Activated B cell treated with CpG ODN at 0.5 μM for 24 hours (primary cell): ENCODE measurements at regions of chr19 and their contacts with region 1.

Region 1: DNA sequence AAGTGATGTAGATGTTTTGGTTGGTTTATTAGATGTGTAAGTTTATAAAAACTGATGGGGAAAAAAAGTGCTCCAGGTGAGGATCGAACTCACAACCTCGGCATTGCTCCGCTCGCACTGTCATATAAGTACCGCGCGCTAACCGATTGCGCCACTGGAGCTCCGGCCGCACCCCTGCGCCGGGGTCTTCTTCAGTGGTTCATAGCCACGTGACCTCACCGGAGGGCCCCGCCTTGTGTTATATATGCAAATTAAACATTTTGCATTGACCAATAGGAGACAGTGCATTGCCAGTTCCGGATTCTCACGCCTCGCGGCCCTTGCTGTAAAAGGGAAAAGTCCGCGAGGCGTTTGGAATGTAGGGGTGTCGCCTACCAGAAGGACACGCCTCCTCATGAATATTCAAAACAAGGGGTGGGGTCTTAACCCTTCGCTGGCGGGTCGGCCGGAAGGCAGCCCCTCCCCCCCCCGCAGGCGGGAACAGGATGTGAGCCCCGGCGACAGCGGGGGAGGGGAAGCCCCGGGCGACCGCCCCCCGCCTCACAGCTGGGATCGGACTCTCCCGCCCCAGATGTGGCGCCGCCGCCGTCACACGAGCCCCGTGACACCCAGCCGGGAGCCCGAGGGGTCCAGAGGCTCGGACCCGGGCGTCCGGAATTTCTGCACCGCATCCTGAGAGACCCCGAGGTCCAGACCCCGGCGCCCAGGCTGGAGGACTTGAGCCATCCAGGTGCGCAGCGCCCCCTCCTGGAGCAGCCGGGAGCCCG is at the start of gene PLEKHG2:
- DNase-seq: peak; percentile 97
- ATAC-seq: peak; percentile 59
- H3K4me3 Mint-ChIP-seq: peak within 1 kb of the TSS; percentile 89
- H3K27ac Mint-ChIP-seq: peak within 1 kb of the TSS; percentile 98
- H3K4me1 Mint-ChIP-seq: peaks cover 59% of the 10 kb centered on the region
- H3K27me3 Mint-ChIP-seq: peaks cover 4% of the 10 kb centered on the region
- CTCF ChIP-seq: no peak
- total RNA-seq, gene PLEKHG2: 111 and 125 TPM in 2 replicates

Region 2: GRCh38 chr19:39335168-39335548 is 77.1 kb before region 1 on chr19:
- CTCF ChIA-PET with region 1: interaction called, 4 read pairs
- POLR2A ChIA-PET with region 1: interaction called, 10 read pairs
- intact Hi-C with region 1: no loop called
- DNase-seq: no peak
- ATAC-seq: peak; percentile 22
- H3K4me3 Mint-ChIP-seq: peak overlapping the region; percentile 94
- H3K27ac Mint-ChIP-seq: peak overlapping the region; percentile 95
- H3K4me1 Mint-ChIP-seq: peaks cover 61% of the 10 kb centered on the region
- H3K27me3 Mint-ChIP-seq: no peaks in the 10 kb centered on the region
- CTCF ChIP-seq: no peak

Region 3: GRCh38 chr19:39351537-39352064 is 60.7 kb before region 1 on chr19:
- CTCF ChIA-PET with region 1: interaction called, 3 read pairs
- POLR2A ChIA-PET with region 1: interaction called, 4 read pairs
- intact Hi-C with region 1: loop called (anchors 1 kb)
- DNase-seq: no peak
- ATAC-seq: peak; percentile 97
- H3K4me3 Mint-ChIP-seq: no peak overlapping the region
- H3K27ac Mint-ChIP-seq: peak overlapping the region; percentile 86
- H3K4me1 Mint-ChIP-seq: peaks cover 25% of the 10 kb centered on the region
- H3K27me3 Mint-ChIP-seq: no peaks in the 10 kb centered on the region
- CTCF ChIP-seq: no peak

Region 4: GRCh38 chr19:39397360-39398296 is 14.7 kb before region 1 on chr19:
- CTCF ChIA-PET with region 1: interaction called, 168 read pairs
- POLR2A ChIA-PET with region 1: interaction called, 213 read pairs
- intact Hi-C with region 1: loop called (anchors 1 kb)
- DNase-seq: peak; percentile 91
- ATAC-seq: peak; percentile 59
- H3K4me3 Mint-ChIP-seq: peak overlapping the region; percentile 67
- H3K27ac Mint-ChIP-seq: peak overlapping the region; percentile 91
- H3K4me1 Mint-ChIP-seq: peaks cover 62% of the 10 kb centered on the region
- H3K27me3 Mint-ChIP-seq: no peaks in the 10 kb centered on the region
- CTCF ChIP-seq: peak; percentile 84

Region 5: GRCh38 chr19:39480337-39481228 is 68.3 kb after region 1 on chr19 and contains the start of gene TIMM50:
- CTCF ChIA-PET with region 1: no interaction called
- POLR2A ChIA-PET with region 1: interaction called, 3 read pairs
- intact Hi-C with region 1: loop called (anchors 1 kb)
- DNase-seq: peak; percentile 98
- ATAC-seq: peak; percentile 99
- H3K4me3 Mint-ChIP-seq: peak within 1 kb of the TSS; percentile 91
- H3K27ac Mint-ChIP-seq: peak within 1 kb of the TSS; percentile 85
- H3K4me1 Mint-ChIP-seq: peaks cover 25% of the 10 kb centered on the region
- H3K27me3 Mint-ChIP-seq: no peaks in the 10 kb centered on the region
- CTCF ChIP-seq: no peak
- total RNA-seq, gene TIMM50: 63.8 and 68.9 TPM in 2 replicates